ENCODE measurements at regions of chr18 and their contacts with region 1.

Region 1: GRCh38 chr18:9869715-9870430 is 15.9 kb upstream of the TXNDC2 start:
- DNase-seq: peak; percentile 40 to 84
- H3K4me3 ChIP-seq: no peak overlapping the region; the same call in 1 of the 2 replicates
- H3K27ac ChIP-seq: peak overlapping the region; percentile 93
- H3K4me1 ChIP-seq: peaks cover 50% of the 10 kb centered on the region
- H3K27me3 ChIP-seq: no peaks in the 10 kb centered on the region
- CTCF ChIP-seq: no peak

Region 2: GRCh38 chr18:9531791-9532401 is 338.0 kb before region 1 on chr18:
- CTCF ChIA-PET with region 1: no interaction called
- POLR2A ChIA-PET with region 1: interaction called, 13 read pairs
- intact Hi-C with region 1: no loop called
- DNase-seq: no peak
- H3K4me3 ChIP-seq: no peak overlapping the region
- H3K27ac ChIP-seq: no peak overlapping the region
- H3K4me1 ChIP-seq: peaks cover 2% of the 10 kb centered on the region; the same call in 1 of the 2 replicates
- H3K27me3 ChIP-seq: no peaks in the 10 kb centered on the region
- CTCF ChIP-seq: no peak

Region 3: GRCh38 chr18:9885170-9886004 is 15.5 kb after region 1 on chr18 and contains the start of gene TXNDC2:
- CTCF ChIA-PET with region 1: no interaction called
- POLR2A ChIA-PET with region 1: no interaction called
- intact Hi-C with region 1: no loop called
- DNase-seq: no peak
- H3K4me3 ChIP-seq: no peak within 1 kb of the TSS
- H3K27ac ChIP-seq: no peak within 1 kb of the TSS
- H3K4me1 ChIP-seq: no peaks in the 10 kb centered on the region
- H3K27me3 ChIP-seq: no peaks in the 10 kb centered on the region
- CTCF ChIP-seq: no peak
- total RNA-seq, gene TXNDC2: 0.11 TPM in 1 of 2 replicates, not detected in the other

Region 4: DNA sequence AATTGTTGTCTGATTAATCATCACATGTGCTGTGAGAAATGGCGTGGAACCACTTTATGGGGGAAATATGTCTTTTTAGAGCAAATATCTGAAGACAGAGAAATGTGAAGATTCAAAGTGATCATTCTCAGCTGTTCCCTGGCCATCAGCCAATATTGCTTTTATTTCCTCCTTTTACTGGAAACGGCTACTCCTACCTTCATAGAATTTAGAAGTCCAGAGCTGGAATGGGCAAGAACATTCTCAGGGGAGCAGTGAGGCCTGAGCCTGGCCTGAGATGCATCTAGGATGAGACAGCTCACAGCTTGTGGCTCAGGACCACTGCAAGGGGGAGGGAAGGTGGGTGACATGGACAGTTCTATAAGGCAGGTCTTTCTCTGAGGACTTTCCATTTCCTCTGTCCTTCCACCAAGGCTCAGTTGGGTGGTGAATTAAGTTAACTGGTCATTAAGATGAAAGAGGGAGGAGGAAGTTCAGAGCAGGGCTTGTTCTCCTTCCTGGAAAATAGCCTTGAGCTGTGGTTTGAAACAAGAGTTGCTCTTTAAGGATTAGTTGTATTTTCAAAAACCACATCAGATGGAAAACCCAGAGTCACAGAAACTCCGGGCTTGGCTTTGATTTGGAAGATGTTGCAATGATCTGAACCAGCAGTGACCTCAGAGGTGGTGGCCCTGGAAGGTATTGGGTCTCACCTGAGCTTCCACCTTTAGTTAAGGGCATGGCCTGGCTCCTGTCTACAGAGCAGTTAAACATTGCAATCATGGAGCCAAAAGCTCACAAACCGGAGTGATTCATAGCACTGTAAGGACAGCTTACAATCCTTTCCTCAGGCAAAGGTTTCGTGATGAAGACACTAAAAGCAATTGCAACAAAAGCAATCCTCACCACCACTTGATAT is 188.3 kb after region 1 on chr18:
- CTCF ChIA-PET with region 1: no interaction called
- POLR2A ChIA-PET with region 1: no interaction called
- intact Hi-C with region 1: no loop called
- DNase-seq: peak in 1 of 2 experiments; percentile 96
- H3K4me3 ChIP-seq: no peak overlapping the region
- H3K27ac ChIP-seq: peak overlapping the region; percentile 92
- H3K4me1 ChIP-seq: peaks cover 35% of the 10 kb centered on the region
- H3K27me3 ChIP-seq: no peaks in the 10 kb centered on the region
- CTCF ChIP-seq: no peak

Measured in PC-9 (cell line).